Transverse colon (tissue), 4 donors: ENCODE measurements at regions of chr9 and their contacts with region 1.

Region 1: DNA sequence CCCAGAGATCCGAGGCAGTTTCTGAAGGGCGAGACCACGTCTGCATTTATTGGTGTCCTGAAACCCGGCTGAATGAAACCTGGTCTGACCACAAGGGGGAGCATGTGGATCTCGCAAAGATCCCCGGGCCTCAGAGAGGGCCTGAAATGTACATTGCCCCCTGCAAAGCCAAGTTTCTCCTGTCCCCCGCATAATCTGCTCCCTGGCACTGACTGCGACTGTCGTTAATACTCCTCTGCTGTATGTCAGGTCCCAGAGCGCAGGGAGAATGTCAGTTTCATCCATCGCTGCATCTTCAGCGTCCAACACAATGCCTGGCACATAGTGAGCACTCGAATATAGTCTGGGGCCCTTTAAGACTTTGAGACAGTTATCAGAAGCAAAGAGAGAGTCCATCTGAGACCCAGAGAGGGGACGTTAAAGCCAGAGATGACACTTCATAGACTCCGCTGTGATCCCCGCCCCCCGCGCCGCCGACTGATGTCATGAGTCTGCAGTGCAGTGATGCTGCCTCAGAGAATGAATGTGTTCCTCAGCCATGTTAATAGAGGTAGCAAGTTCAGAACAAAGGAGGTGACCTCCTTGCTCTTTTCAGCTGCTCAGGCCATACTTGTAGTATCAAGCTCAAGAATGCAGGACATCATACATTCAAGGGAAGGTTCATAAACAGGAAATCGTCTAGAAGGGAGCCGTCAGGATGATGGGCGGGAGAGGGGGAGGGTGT is 74.5 kb upstream of the BARHL1 start:
- DNase-seq: peak; percentile 68
- H3K4me3 ChIP-seq: no peak overlapping the region
- H3K27ac ChIP-seq: no peak overlapping the region
- H3K4me1 ChIP-seq: no peaks in the 10 kb centered on the region
- H3K27me3 ChIP-seq: peaks cover 40% of the 10 kb centered on the region
- CTCF ChIP-seq: peak; percentile 77 to 82 (median 81)
- EP300 ChIP-seq: no peak
- POLR2A ChIP-seq: no peak

Region 2: DNA sequence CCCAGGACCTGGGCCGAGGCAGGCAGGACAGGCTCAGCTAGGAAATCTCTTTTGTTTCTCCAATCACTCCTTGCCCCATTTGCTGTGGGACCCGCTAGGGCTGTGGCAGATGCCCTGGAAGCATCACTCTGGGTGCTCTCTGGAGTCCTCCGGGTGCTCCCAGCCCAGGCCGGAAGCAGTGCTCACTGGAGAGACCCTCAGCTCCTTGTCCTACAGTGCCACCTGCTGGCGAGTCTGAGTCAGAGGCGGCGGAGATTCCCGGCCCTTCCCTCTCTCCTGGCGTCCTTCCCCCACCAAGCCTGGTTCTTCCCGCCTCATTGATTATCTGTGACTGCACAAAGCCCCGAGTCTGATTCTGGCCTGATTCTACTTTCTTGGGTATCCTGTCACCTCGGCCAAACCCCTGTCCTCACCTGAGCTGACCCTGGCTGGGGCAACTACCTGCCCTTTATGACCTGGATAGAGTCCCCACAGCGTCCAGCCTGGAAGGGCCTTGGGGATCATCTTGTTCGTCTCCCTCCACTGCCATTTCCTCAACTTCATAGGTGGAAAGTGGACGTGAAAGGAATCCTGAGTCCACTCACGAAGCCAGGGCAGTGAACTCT is 67.2 kb after region 1 on chr9:
- in situ Hi-C with region 1: loop called in 2 of 4 experiments (anchors 5 to 10 kb)
- intact Hi-C with region 1: loop called (anchors 2 kb)
- DNase-seq: peak; percentile 73
- H3K4me3 ChIP-seq: no peak overlapping the region
- H3K27ac ChIP-seq: no peak overlapping the region
- H3K4me1 ChIP-seq: no peaks in the 10 kb centered on the region
- H3K27me3 ChIP-seq: peaks cover 80% of the 10 kb centered on the region
- CTCF ChIP-seq: peak; percentile 65 to 79 (median 74)
- EP300 ChIP-seq: no peak
- POLR2A ChIP-seq: no peak

Region 3: GRCh38 chr9:132694157-132694556 is 186.2 kb after region 1 on chr9:
- in situ Hi-C with region 1: no loop called
- intact Hi-C with region 1: no loop called
- DNase-seq: no peak
- H3K4me3 ChIP-seq: no peak overlapping the region
- H3K27ac ChIP-seq: no peak overlapping the region
- H3K4me1 ChIP-seq: no peaks in the 10 kb centered on the region
- H3K27me3 ChIP-seq: no peaks in the 10 kb centered on the region
- CTCF ChIP-seq: peak in 3 of 5 experiments; percentile 15 to 26 (median 17)
- EP300 ChIP-seq: no peak
- POLR2A ChIP-seq: no peak